ENCODE measurements at regions of chr15 and their contacts with region 1.

Region 1: GRCh38 chr15:83585601-83586335 is 68.2 kb upstream of the ADAMTSL3 start:
- DNase-seq: no peak
- H3K4me3 Mint-ChIP-seq: no peak overlapping the region
- H3K27ac Mint-ChIP-seq: no peak overlapping the region
- H3K4me1 Mint-ChIP-seq: no peaks in the 10 kb centered on the region
- H3K27me3 Mint-ChIP-seq: no peaks in the 10 kb centered on the region
- CTCF ChIP-seq: no peak

Region 2: DNA sequence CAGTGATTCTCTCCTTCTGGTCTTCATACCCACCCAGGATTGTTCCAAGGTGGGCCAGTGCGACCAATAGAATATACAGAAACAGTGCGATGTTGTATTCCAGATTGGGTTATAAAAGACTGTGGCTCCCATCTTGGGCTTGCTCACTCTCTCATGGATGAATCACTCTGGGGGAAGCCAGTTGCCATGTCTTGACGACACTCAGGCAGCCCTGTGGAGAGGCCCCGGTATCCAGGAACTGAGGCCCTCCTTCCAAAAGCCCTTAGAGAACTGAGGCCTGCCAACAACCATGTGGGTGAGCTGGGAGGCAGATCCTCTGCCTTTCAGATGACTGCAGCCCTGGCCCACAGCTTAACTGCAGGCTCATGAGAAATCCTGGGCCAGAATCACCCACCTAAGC is 81.4 kb before region 1 on chr15:
- CTCF ChIA-PET with region 1: no interaction called
- POLR2A ChIA-PET with region 1: no interaction called
- intact Hi-C with region 1: no loop called
- DNase-seq: peak; percentile 3
- H3K4me3 Mint-ChIP-seq: no peak overlapping the region
- H3K27ac Mint-ChIP-seq: no peak overlapping the region
- H3K4me1 Mint-ChIP-seq: no peaks in the 10 kb centered on the region
- H3K27me3 Mint-ChIP-seq: no peaks in the 10 kb centered on the region
- CTCF ChIP-seq: no peak

Region 3: GRCh38 chr15:83546512-83546889 is 39.3 kb before region 1 on chr15:
- CTCF ChIA-PET with region 1: no interaction called
- POLR2A ChIA-PET with region 1: no interaction called
- intact Hi-C with region 1: no loop called
- DNase-seq: no peak
- H3K4me3 Mint-ChIP-seq: no peak overlapping the region
- H3K27ac Mint-ChIP-seq: no peak overlapping the region
- H3K4me1 Mint-ChIP-seq: no peaks in the 10 kb centered on the region
- H3K27me3 Mint-ChIP-seq: peaks cover 20% of the 10 kb centered on the region
- CTCF ChIP-seq: no peak

Region 4: GRCh38 chr15:83559310-83559966 is 26.3 kb before region 1 on chr15:
- CTCF ChIA-PET with region 1: interaction called, 10 read pairs
- POLR2A ChIA-PET with region 1: no interaction called
- intact Hi-C with region 1: no loop called
- DNase-seq: peak; percentile 88
- H3K4me3 Mint-ChIP-seq: no peak overlapping the region
- H3K27ac Mint-ChIP-seq: no peak overlapping the region
- H3K4me1 Mint-ChIP-seq: peaks cover 6% of the 10 kb centered on the region
- H3K27me3 Mint-ChIP-seq: no peaks in the 10 kb centered on the region
- CTCF ChIP-seq: peak; percentile 79

Region 5: DNA sequence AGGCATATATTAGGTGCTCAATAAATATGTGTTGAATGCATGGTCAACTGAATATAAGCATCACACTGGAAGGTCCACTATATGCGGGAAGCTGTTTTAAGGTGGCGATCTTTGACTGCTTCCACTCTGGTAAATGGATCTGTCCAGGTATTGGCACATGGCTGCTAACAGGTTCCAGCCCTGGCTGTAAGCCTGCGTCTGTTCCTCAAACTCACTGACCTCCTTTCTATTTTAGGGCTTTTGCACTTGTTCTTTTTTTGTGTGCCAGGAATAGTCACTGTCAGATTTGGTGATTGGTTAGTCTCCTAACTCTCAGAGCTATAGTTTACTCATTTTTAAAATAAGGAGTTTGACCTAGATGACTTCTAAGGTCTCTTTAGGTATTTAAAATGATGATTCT is 114.3 kb after region 1 on chr15:
- CTCF ChIA-PET with region 1: no interaction called
- POLR2A ChIA-PET with region 1: no interaction called
- intact Hi-C with region 1: no loop called
- DNase-seq: no peak
- H3K4me3 Mint-ChIP-seq: no peak overlapping the region
- H3K27ac Mint-ChIP-seq: no peak overlapping the region
- H3K4me1 Mint-ChIP-seq: peaks cover 11% of the 10 kb centered on the region
- H3K27me3 Mint-ChIP-seq: no peaks in the 10 kb centered on the region
- CTCF ChIP-seq: no peak